Endothelial cell of umbilical vein (primary cell): ENCODE measurements at regions of chr17 and their contacts with region 1.

Region 1: GRCh38 chr17:58112970-58113631 is 29.9 kb downstream of the DYNLL2 start:
- DNase-seq: peak; percentile 69
- H3K4me3 ChIP-seq: no peak overlapping the region
- H3K27ac ChIP-seq: no peak overlapping the region
- H3K4me1 ChIP-seq: no peaks in the 10 kb centered on the region
- H3K27me3 ChIP-seq: peaks cover 4 to 5% of the 10 kb centered on the region in 2 experiments
- CTCF ChIP-seq: peak; percentile 84 to 89
- POLR2A ChIP-seq: no peak

Region 2: GRCh38 chr17:57597531-57598453 is 515.3 kb before region 1 on chr17:
- CTCF ChIA-PET with region 1: interaction called, 5 read pairs
- POLR2A ChIA-PET with region 1: no interaction called
- dilution Hi-C with region 1: no loop called
- intact Hi-C with region 1: loop called (anchors 1 kb)
- DNase-seq: peak; percentile 67
- H3K4me3 ChIP-seq: no peak overlapping the region
- H3K27ac ChIP-seq: no peak overlapping the region
- H3K4me1 ChIP-seq: no peaks in the 10 kb centered on the region
- H3K27me3 ChIP-seq: peaks cover 7 to 9% of the 10 kb centered on the region in 2 experiments
- CTCF ChIP-seq: peak; percentile 78 to 79
- POLR2A ChIP-seq: no peak

Region 3: GRCh38 chr17:57861000-57861789 is 251.9 kb before region 1 on chr17:
- CTCF ChIA-PET with region 1: interaction called, 51 read pairs
- POLR2A ChIA-PET with region 1: no interaction called
- dilution Hi-C with region 1: no loop called
- intact Hi-C with region 1: loop called (anchors 1 kb)
- DNase-seq: peak; percentile 30
- H3K4me3 ChIP-seq: peak overlapping the region; percentile 21 to 49 (median 31)
- H3K27ac ChIP-seq: no peak overlapping the region
- H3K4me1 ChIP-seq: peaks cover 17% of the 10 kb centered on the region
- H3K27me3 ChIP-seq: no peaks in the 10 kb centered on the region
- CTCF ChIP-seq: no peak
- POLR2A ChIP-seq: no peak

Region 4: DNA sequence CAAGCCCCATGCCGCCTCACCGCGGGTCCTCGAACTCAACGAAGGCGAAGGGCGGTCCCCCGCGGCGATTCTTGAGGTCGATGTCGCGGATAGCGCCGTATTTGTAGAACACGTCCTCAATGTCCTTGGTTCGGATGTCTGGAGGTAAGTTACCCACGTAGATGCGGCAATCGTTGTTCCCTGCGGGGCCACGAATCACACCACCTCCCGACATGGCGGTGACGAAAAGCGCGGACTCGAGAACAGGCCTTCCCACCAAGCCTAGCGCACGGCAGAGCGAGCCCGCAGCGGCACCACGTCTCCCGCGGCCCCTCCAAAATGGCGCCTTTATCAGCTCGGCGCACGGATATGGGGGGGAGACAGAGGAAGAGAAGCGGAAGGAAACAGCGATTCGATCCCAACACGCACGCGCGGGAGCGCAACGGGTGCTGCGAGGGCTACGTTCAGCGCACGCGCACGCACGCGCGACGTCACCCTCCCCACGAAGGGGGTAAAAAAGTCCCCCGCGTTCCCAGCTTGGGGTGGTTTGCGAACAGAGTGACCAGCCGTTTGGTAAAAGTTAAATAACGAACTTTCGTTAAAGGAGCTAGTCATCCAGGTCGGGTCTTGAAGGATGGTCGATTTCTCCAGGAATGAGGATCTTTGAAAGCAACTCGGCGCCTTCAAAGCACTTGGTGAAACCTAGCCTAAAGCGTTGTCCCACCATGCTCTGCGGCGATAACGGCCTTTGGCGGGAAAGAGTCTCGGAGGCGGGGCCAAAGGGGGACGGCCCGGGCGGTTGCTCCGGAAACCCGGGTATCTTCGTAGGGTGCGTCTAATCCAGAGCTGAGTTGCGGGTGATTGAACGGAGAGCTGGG is 105.9 kb before region 1 on chr17 and contains the start of gene SRSF1:
- CTCF ChIA-PET with region 1: interaction called, 6 read pairs
- POLR2A ChIA-PET with region 1: no interaction called
- dilution Hi-C with region 1: no loop called
- intact Hi-C with region 1: loop called (anchors 1 kb)
- DNase-seq: peak; percentile 98
- H3K4me3 ChIP-seq: peak within 1 kb of the TSS; percentile 39 to 95 (median 85)
- H3K27ac ChIP-seq: peak within 1 kb of the TSS; percentile 67
- H3K4me1 ChIP-seq: peaks cover 36% of the 10 kb centered on the region
- H3K27me3 ChIP-seq: no peaks in the 10 kb centered on the region
- CTCF ChIP-seq: no peak
- POLR2A ChIP-seq: peak; percentile 97
- total RNA-seq, gene SRSF1: 309 and 316 TPM in 2 replicates

Region 5: DNA sequence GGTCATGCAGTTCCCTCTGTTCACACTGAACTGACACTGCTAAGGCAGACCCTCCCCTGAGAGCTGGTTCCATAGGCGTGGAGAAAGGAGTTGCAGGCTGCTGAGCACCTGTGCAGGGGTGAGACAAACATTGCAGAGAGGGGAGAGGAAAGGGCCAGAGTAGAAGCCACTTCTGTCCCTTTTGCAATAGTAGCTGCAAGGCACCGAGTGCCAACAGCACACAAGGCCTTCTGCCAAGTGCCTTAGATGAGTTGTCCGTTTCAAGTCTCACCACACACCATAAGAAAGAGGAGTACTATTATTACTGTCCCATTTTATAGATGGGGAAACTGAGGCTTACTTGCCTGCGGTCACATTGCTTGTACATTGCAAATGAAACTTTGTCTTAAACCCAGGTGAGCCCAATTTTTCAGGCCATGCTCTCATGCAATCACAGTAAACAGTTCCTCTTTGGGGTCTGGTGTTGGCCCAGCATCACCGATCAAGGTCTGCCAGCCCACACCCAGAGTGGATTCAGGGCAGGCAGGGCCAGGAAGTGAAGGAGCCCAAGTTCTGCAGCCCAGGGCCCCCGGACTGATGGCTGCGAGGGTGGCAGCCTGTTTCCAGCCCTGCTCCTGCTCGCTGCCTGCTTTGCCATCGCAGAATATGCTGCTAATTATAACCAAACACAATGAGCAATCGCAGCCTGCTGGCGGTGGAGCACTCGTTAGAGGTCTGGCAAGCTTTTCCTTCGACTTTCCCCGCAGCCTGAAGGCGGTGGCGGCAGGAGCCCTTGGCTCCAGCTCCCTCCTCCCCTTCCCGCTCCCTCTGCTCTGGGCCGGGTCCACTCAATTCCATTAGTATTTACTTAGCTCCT is 66.6 kb before region 1 on chr17:
- CTCF ChIA-PET with region 1: no interaction called
- POLR2A ChIA-PET with region 1: no interaction called
- dilution Hi-C with region 1: no loop called
- intact Hi-C with region 1: no loop called
- DNase-seq: no peak
- H3K4me3 ChIP-seq: no peak overlapping the region
- H3K27ac ChIP-seq: no peak overlapping the region
- H3K4me1 ChIP-seq: no peaks in the 10 kb centered on the region
- H3K27me3 ChIP-seq: peaks cover 11 to 15% of the 10 kb centered on the region in 2 experiments
- CTCF ChIP-seq: no peak
- POLR2A ChIP-seq: no peak